Ascending aorta (tissue), 2 donors: ENCODE measurements at regions of chr3 and their contacts with region 1.

Region 1: DNA sequence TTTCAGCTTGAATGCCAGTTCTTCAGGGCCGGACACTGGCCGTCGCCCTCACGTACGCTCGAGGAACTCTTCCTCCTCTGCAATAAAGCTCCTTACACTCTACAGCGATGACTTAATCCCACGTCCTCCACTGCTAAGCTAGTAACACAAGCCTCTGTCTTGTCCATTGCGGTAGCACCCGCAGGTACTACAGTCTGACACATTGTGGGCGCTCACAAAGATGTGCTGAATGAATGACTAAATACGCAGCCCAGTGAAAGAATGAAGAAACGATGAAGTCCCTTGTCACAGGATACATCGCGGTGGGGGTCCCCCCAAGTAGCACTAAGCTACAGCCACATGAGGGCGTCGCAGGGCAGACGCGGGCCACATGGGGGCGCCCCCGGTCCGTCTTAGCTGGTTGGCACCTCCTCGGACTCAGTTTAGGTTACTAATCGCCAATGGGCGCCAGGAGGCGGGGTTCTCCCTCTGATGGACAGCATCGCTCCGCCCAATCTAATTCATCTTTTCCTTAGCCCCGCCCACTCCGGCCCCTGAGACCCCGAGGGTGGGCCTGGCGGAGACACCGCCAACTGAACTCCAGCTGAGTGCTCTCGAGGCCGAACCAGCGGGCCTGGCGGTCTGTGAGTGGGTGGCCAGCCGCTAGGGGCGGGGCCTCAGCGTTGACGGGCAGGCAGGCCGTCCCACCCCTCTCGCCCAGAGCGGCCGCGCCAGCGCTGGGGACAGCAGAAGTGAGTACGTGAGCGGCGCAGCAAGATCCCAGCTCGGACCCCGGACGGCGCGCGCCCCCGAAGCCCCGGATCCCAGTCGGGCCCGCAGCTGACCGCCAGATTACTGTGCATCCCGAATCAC is at the start of gene EPHB3:
- DNase-seq: peak; percentile 98 to 100
- H3K4me3 ChIP-seq: peak within 1 kb of the TSS; percentile 69 to 75
- H3K27ac ChIP-seq: peak within 1 kb of the TSS; percentile 73
- H3K4me1 ChIP-seq: peaks cover 0 to 17% of the 10 kb centered on the region in 2 donors
- H3K27me3 ChIP-seq: no peaks in the 10 kb centered on the region
- CTCF ChIP-seq: peak; percentile 94 to 99 (median 96)
- total RNA-seq, gene EPHB3: 1.2 TPM

Region 2: DNA sequence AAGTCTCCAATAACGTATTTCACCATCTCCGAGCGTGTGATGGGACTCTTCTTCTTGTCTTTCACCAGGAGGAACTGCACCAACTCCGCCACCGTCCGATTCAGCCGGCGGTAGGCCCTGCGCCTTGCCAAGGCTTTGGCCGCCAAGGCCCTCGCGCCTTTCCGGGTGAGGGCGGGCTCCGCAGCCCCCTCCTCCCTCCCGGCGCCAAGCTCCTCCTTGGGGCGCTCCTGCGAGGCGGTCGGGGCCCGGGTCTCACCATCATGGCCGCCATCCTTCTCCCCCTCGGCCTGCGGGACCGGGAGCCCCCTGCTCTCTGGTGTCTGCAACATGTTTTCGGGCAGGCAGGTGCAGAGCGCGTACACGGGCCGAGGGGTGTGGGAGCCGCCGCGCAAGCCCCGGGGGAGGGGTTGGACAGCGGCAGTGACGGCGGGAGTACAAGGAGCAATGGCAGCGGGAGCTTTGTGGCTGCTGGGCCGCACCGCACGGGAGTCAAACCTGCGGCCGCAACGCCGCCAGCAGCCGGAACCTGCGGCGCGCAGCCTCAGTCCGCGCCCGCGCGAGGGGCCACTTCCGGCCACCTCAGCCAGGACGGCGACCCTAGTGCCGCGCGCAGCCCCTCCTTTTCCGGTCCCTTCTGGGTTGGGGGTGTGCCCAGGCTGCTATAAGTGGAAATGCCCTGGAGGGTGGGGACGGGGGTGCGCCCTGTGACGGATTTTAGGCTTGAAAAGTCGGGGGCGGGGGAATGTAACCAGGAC is 150.4 kb after region 1 on chr3 and contains the start of gene MAGEF1:
- intact Hi-C with region 1: loop called (anchors 1 kb)
- DNase-seq: peak; percentile 15 to 91
- H3K4me3 ChIP-seq: peak within 1 kb of the TSS; percentile 94 to 96
- H3K27ac ChIP-seq: peak within 1 kb of the TSS; percentile 92 to 96
- H3K4me1 ChIP-seq: peaks cover 3 to 11% of the 10 kb centered on the region in 2 donors
- H3K27me3 ChIP-seq: no peaks in the 10 kb centered on the region
- CTCF ChIP-seq: no peak
- total RNA-seq, gene MAGEF1: 5.2 TPM

Region 3: DNA sequence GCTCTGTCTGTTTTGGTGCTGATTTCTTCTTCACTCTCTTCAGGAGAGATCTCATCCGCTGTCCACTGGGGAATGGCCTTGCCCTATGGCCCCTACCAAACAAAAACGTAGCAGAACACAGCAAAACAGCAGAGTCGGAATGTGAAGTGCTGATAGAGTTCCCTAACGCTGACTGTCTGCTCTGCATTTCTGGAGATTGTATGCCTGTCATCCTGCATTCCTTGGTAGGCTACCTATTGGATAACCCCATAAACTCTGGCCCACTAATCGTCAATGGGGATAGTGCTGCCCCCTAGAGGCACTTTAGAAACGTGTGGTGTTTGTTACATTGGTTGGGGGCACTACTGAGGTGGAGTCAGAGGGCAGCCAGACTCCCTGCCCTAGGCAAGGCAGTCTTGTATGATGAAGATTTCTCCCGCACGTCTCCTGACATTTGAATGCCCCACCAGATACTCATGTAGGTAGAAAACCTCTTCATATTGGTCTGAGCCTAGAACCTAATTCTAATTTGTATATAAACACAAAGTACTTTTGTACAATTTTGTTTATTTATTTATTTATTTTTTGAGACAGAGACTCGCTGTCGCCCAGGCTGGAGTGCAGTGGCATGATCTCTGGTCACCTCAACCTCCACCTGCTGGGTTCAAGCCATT is 166.2 kb after region 1 on chr3:
- intact Hi-C with region 1: loop called (anchors 1 kb)
- DNase-seq: peak in 1 of 2 donors; percentile 72
- H3K4me3 ChIP-seq: no peak overlapping the region
- H3K27ac ChIP-seq: no peak overlapping the region
- H3K4me1 ChIP-seq: no peaks in the 10 kb centered on the region
- H3K27me3 ChIP-seq: no peaks in the 10 kb centered on the region
- CTCF ChIP-seq: peak; percentile 50 to 71 (median 54)

Region 4: DNA sequence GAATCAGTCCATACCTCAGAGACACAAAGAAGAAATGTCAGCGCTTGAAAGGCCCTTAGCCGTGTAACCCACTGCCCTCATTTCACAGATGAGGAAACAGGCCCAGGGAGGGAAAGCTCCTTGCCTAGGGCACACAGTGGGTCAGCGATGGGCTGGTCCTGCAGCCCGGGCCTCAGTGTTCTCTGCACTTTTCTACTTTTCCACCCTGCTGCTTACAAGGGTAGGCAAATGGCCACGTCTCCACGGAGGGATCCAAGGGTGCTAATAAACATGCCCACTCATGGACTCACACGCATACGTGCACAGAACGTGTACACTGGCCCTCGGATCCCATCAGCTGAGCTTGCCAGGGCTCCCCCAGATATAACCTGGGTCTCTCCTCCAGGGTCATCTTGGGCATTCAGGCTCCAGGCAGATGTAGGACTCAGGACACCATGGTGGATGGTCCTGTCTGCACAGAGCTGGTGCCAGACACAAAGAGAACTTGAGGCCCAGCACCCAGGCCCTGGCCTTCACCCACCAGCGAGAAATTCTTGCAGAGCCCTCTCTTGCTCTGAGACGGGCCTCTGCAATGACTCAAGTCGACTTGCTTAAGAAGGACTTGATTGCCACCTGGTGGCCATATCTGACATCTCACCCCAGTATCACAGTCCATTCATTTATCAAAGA is 216.2 kb after region 1 on chr3:
- intact Hi-C with region 1: loop called (anchors 1 kb)
- DNase-seq: peak; percentile 58 to 97
- H3K4me3 ChIP-seq: no peak overlapping the region
- H3K27ac ChIP-seq: no peak overlapping the region
- H3K4me1 ChIP-seq: no peaks in the 10 kb centered on the region
- H3K27me3 ChIP-seq: no peaks in the 10 kb centered on the region
- CTCF ChIP-seq: peak; percentile 74 to 91 (median 88)

Region 5: GRCh38 chr3:184811999-184812661 is 250.8 kb after region 1 on chr3 and contains the start of gene VPS8:
- intact Hi-C with region 1: loop called (anchors 1 kb)
- DNase-seq: peak; percentile 82 to 98
- H3K4me3 ChIP-seq: peak within 1 kb of the TSS; percentile 73 to 93
- H3K27ac ChIP-seq: peak within 1 kb of the TSS; percentile 56 to 79
- H3K4me1 ChIP-seq: peaks cover 0 to 6% of the 10 kb centered on the region in 2 donors
- H3K27me3 ChIP-seq: no peaks in the 10 kb centered on the region
- CTCF ChIP-seq: peak; percentile 33 to 61 (median 49)
- total RNA-seq, gene VPS8: 24.9 TPM